CD8-positive, alpha-beta memory T cell (primary cell): ENCODE measurements at regions of chr14 and their contacts with region 1.

Region 1: DNA sequence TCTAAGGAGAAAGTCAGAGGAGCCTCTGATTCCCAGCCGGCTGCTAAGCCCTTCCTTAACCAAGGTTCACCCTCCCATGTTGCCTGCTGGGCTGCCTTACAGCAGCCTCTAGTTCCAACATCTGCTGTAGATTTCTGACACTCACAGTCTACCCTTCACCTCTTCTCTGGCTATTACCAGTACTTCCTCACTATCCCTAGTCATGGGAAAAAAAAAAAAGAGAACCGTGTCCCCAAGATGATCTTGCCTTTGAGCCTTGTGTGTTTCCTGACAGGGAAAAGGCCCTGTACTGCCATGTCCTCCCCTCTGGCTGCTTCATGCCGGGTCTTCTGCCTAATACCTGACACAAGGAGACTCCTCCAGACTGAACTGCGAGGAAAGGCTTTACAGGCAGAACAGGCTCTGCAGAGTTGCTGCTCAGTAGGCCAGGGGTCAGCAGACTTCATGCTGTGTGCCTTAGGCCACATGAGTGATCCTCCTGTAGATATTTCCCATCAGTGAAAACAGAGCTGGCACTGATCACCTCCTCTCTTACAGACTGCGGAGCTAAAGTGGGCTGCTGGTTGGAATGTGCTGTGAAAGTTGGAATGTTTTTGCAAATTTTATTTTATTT is 46.8 kb downstream of the PRKCH start:
- DNase-seq: no peak
- H3K4me3 ChIP-seq: no peak overlapping the region
- H3K4me3 Mint-ChIP-seq: peak overlapping the region in 6 of 7 donors; percentile 32 to 85 (median 67)
- H3K27ac ChIP-seq: no peak overlapping the region
- H3K27ac Mint-ChIP-seq: peak overlapping the region in 5 of 8 donors; percentile 70 to 95 (median 87)
- H3K4me1 ChIP-seq: peaks cover 97% of the 10 kb centered on the region
- H3K4me1 Mint-ChIP-seq: peaks cover 0 to 33% (median 31%) of the 10 kb centered on the region in 3 donors
- H3K27me3 ChIP-seq: no peaks in the 10 kb centered on the region
- H3K27me3 Mint-ChIP-seq: peaks cover 0 to 3% of the 10 kb centered on the region in 2 donors

Region 2: DNA sequence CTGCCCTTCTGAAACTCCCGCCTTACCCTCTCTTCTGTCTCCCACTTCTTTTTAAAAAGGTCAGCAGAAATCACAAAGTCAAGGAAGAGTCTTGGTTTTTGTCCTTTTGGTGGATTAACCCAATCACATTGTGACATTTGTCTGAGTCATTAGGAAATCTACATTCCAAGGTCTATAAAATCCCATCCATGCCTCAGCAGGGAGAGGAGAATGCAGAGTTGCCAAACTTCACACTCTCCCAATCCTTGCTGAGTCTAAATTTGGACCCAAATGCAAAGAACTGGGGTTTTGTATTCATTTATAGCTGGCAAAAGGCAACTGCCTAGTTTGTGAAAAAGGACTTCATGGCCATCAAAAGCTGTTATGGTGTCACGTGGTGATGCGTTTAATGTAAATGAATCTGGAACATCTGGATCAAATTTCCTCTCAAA is 155.0 kb before region 1 on chr14:
- CTCF ChIA-PET with region 1: no interaction called
- POLR2A ChIA-PET with region 1: no interaction called
- DNase-seq: no peak
- H3K4me3 ChIP-seq: no peak overlapping the region
- H3K4me3 Mint-ChIP-seq: no peak overlapping the region
- H3K27ac ChIP-seq: no peak overlapping the region
- H3K27ac Mint-ChIP-seq: no peak overlapping the region
- H3K4me1 ChIP-seq: no peaks in the 10 kb centered on the region
- H3K4me1 Mint-ChIP-seq: no peaks in the 10 kb centered on the region
- H3K27me3 ChIP-seq: no peaks in the 10 kb centered on the region
- H3K27me3 Mint-ChIP-seq: peaks cover 12 to 61% of the 10 kb centered on the region in 2 donors

Region 3: DNA sequence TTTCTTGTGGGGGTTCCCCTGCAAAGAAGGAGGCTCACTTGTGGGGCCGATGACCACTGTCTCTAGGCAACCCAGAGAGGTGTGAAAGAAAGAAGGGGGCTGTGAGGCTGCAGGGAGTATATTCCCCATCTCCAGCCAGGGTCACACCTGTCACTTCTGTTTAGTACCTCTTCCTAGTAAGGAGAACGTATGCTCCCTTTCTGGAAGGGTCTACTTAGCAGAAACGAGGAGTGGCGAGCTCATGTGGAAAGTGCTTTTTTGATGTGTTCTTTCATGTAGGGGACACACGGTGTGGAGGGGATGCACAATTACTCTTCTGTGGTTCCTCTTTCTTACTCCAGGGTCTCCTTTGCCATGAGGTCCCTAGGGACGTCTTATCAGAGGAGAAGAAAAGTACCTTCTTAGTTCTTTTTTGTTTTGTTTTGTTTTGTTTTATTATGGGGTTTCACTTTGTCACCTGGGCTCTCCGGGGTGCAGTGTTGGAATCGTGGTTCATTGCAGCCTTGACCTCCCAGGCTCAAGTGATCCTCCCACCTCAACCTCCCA is 11.5 kb after region 1 on chr14:
- CTCF ChIA-PET with region 1: interaction called, 14 read pairs
- POLR2A ChIA-PET with region 1: interaction called, 3 read pairs
- DNase-seq: peak in 2 of 5 donors; percentile 49 to 60
- H3K4me3 ChIP-seq: peak overlapping the region; percentile 28
- H3K4me3 Mint-ChIP-seq: peak overlapping the region in 4 of 7 donors; percentile 64 to 87 (median 76)
- H3K27ac ChIP-seq: no peak overlapping the region
- H3K27ac Mint-ChIP-seq: peak overlapping the region in 4 of 8 donors; percentile 86 to 97 (median 95)
- H3K4me1 ChIP-seq: peaks cover 98% of the 10 kb centered on the region
- H3K4me1 Mint-ChIP-seq: peaks cover 0 to 32% (median 0%) of the 10 kb centered on the region in 3 donors
- H3K27me3 ChIP-seq: no peaks in the 10 kb centered on the region
- H3K27me3 Mint-ChIP-seq: no peaks in the 10 kb centered on the region

Region 4: GRCh38 chr14:61391119-61391518 is 22.9 kb after region 1 on chr14:
- CTCF ChIA-PET with region 1: no interaction called
- POLR2A ChIA-PET with region 1: no interaction called
- DNase-seq: no peak
- H3K4me3 ChIP-seq: peak overlapping the region; percentile 9
- H3K4me3 Mint-ChIP-seq: peak overlapping the region in 3 of 7 donors; percentile 65 to 87 (median 72)
- H3K27ac ChIP-seq: no peak overlapping the region
- H3K27ac Mint-ChIP-seq: peak overlapping the region in 1 of 8 donors; percentile 76
- H3K4me1 ChIP-seq: peaks cover 99% of the 10 kb centered on the region
- H3K4me1 Mint-ChIP-seq: peaks cover 0 to 3% (median 1%) of the 10 kb centered on the region in 3 donors
- H3K27me3 ChIP-seq: no peaks in the 10 kb centered on the region
- H3K27me3 Mint-ChIP-seq: no peaks in the 10 kb centered on the region

Region 5: GRCh38 chr14:61409776-61410175 is 41.6 kb after region 1 on chr14:
- CTCF ChIA-PET with region 1: no interaction called
- POLR2A ChIA-PET with region 1: no interaction called
- DNase-seq: no peak
- H3K4me3 ChIP-seq: no peak overlapping the region
- H3K4me3 Mint-ChIP-seq: peak overlapping the region in 2 of 7 donors; percentile 14 to 23
- H3K27ac ChIP-seq: no peak overlapping the region
- H3K27ac Mint-ChIP-seq: peak overlapping the region in 5 of 8 donors; percentile 15 to 80 (median 33)
- H3K4me1 ChIP-seq: peaks cover 94% of the 10 kb centered on the region
- H3K4me1 Mint-ChIP-seq: peaks cover 0 to 50% (median 46%) of the 10 kb centered on the region in 3 donors
- H3K27me3 ChIP-seq: no peaks in the 10 kb centered on the region
- H3K27me3 Mint-ChIP-seq: no peaks in the 10 kb centered on the region